Right lobe of liver (tissue), 6 donors: ENCODE measurements at regions of chr10 and their contacts with region 1.

Region 1: GRCh38 chr10:118800920-118801319 is 46.1 kb upstream of the CACUL1 start:
- DNase-seq: peak in 2 of 3 donors; percentile 42 to 59
- ATAC-seq: peak; percentile 77 to 86 (median 82)
- H3K4me3 ChIP-seq: no peak overlapping the region
- H3K27ac ChIP-seq: no peak overlapping the region
- H3K4me1 ChIP-seq: peaks cover 0 to 9% (median 0%) of the 10 kb centered on the region in 4 donors
- H3K27me3 ChIP-seq: no peaks in the 10 kb centered on the region
- CTCF ChIP-seq: peak; percentile 56 to 72 (median 62)
- POLR2A ChIP-seq: no peak

Region 2: DNA sequence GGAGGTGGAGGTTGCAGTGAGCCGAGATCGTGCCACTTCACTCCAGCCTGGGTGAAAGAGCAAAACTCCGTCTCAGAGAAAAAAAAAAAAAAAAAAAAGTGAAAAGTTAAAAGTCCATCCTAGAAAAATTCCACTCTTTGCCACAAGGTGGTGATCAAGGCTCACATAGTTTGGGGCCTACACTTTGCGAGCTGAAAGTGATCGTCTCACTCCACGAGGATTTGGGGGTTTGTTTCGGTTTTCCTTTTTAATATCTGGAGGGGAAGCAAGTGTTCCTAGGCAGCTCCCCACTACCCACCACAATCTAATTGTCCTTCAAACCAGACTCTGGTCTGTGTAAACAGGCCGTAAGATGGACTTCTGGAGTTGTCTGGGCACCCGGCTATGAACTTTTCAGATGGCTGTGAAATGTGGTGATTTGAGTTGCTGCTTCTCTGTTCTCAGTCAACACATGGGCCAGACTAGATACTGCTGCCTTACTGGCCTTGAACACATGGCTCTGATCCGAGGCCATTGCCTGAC is 232.5 kb before region 1 on chr10:
- intact Hi-C with region 1: loop called (anchors 10 kb)
- DNase-seq: no peak
- ATAC-seq: peak; percentile 68 to 78 (median 74)
- H3K4me3 ChIP-seq: no peak overlapping the region
- H3K27ac ChIP-seq: no peak overlapping the region
- H3K4me1 ChIP-seq: no peaks in the 10 kb centered on the region
- H3K27me3 ChIP-seq: no peaks in the 10 kb centered on the region
- CTCF ChIP-seq: peak; percentile 58 to 75 (median 66)
- POLR2A ChIP-seq: no peak

Region 3: GRCh38 chr10:118594392-118595063 is 206.4 kb before region 1 on chr10:
- intact Hi-C with region 1: loop called in 1 of 2 experiments (anchors 10 kb)
- DNase-seq: peak in 2 of 3 donors; percentile 26 to 62
- ATAC-seq: peak; percentile 49 to 72 (median 63)
- H3K4me3 ChIP-seq: no peak overlapping the region
- H3K27ac ChIP-seq: no peak overlapping the region
- H3K4me1 ChIP-seq: no peaks in the 10 kb centered on the region
- H3K27me3 ChIP-seq: peaks cover 0 to 22% of the 10 kb centered on the region in 2 donors
- CTCF ChIP-seq: peak in 3 of 4 donors; percentile 19 to 35 (median 30)
- POLR2A ChIP-seq: no peak

Region 4: DNA sequence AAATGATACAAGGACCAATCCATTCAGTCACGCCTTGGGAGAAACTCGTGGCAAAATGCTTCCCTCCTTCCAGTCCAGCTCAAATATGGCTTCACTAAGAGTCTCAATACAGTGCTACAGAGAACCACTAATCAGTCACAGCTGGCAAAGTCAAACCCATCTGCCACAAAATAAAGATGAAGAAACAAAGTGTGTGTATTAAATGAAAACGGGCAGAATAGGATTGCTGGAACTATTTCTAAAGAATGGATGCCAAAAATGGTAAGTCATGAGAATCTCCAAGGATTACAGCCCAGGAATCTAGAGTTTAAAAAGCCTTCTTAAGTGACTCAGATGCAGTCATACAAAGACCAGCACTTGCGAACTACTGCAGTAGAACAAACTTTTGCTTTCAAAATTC is 108.0 kb before region 1 on chr10:
- intact Hi-C with region 1: no loop called
- DNase-seq: no peak
- ATAC-seq: no peak
- H3K4me3 ChIP-seq: no peak overlapping the region
- H3K27ac ChIP-seq: no peak overlapping the region
- H3K4me1 ChIP-seq: peaks cover 0 to 5% (median 0%) of the 10 kb centered on the region in 4 donors
- H3K27me3 ChIP-seq: no peaks in the 10 kb centered on the region
- CTCF ChIP-seq: no peak
- POLR2A ChIP-seq: no peak

Region 5: GRCh38 chr10:118856106-118856505 is 55.2 kb after region 1 on chr10:
- intact Hi-C with region 1: no loop called
- DNase-seq: no peak
- ATAC-seq: no peak
- H3K4me3 ChIP-seq: no peak overlapping the region
- H3K27ac ChIP-seq: no peak overlapping the region
- H3K4me1 ChIP-seq: peaks cover 0 to 8% (median 0%) of the 10 kb centered on the region in 4 donors
- H3K27me3 ChIP-seq: no peaks in the 10 kb centered on the region
- CTCF ChIP-seq: no peak
- POLR2A ChIP-seq: no peak